Posterior vena cava (tissue), 2 donors: ENCODE measurements at regions of chr11 and their contacts with region 1.

Region 1: DNA sequence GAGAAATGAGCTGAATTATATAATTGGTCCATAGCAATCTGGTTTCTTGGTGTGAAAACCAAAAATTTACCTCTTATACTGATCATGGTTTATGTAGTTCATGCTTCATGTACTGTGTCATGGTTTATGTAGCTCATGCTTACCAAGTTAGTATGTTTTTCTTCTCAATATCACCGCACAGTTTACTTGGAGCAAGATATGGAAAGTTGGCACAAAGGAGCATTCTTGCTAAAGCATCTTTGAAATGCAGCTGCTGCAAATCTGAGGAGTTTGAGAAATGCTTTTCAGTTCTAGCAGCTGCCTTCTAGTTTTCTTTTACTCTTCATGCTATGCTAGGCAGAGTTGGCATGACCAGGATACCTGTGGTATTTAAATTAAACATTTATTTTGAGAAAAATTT is 4.5 kb downstream of the OR10G7 start:
- DNase-seq: no peak

Region 2: GRCh38 chr11:123616505-123617198 is 420.0 kb before region 1 on chr11:
- intact Hi-C with region 1: loop called in 1 of 2 experiments (anchors 5 kb)
- DNase-seq: no peak